ENCODE measurements at regions of chr1 and their contacts with region 1.

Region 1: DNA sequence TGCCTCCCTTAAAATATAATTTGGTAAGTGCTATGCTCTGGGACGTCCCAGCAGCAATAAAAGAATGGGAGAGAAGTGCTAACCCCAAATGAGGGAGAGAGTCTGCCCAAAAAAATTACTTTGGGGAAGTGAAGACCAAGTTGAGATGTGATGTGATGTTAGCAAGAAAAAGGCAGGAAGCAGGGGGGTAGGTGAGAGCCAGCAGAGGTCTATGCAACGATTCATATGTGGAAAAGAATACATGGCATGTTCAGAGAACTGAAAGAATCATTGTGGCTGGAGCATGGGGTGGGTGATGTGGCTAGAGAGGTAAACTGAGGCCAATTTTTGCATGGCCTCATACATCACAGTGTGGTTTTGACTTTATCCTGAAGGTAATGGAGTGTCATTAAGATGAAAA is 5.6 kb upstream of the CTPS1 start:
- DNase-seq: no peak
- H3K4me3 ChIP-seq: no peak overlapping the region
- H3K27ac ChIP-seq: no peak overlapping the region
- H3K4me1 ChIP-seq: peaks cover 7% of the 10 kb centered on the region; the same call in 1 of the 2 replicates
- H3K27me3 ChIP-seq: no peaks in the 10 kb centered on the region
- CTCF ChIP-seq: no peak

Region 2: DNA sequence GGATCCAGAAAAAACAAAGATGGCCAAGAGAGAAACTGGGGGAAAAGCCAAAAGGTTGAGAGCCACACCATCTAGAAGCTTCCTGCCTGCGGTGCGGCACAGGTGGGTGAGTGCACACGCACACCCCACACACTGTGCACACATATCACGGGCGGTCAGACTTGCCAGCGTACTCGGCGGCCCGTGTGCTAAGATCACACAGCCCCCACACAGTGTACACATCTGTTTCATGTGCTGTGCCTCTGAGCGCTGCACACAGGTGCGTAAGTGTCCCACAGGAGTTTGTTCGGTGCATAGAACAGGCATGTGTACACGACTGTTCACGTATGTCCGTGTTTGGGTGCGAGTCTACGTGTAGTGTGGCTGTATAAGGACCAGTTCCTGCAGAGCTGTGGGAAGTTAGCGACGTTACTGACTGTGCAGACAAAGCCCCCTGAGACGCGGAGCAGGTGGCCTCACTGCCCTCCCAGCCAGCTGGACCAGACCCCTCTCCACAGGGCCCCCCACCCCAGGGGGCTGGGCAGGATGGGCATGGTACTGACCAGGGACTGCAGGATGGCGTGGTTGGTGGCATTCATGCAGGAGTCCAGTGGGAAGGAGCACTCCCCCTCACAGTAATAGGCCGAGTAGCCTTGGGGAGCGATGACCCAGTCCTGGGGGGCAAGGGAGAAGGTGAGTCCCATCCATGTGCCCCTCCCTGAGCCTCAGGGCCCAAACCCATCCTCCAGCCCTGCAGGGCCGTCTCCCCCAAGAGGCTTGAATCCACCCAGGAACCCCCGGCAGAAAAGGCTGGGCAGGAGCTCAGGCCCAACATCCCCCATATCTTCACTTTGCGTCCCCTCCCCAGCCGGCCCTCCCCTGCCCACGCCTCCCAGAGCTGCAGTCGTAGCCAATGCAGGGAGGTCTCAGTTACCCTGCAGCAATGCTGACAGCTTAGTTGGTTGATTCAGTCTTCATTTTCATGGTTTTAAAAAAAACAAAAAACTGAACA is 1211.1 kb before region 1 on chr1:
- CTCF ChIA-PET with region 1: no interaction called
- POLR2A ChIA-PET with region 1: interaction called, 15 read pairs
- intact Hi-C with region 1: no loop called
- DNase-seq: no peak
- H3K4me3 ChIP-seq: no peak overlapping the region
- H3K27ac ChIP-seq: no peak overlapping the region
- H3K4me1 ChIP-seq: no peaks in the 10 kb centered on the region
- H3K27me3 ChIP-seq: no peaks in the 10 kb centered on the region
- CTCF ChIP-seq: no peak

Region 3: GRCh38 chr1:40107290-40108262 is 866.3 kb before region 1 on chr1:
- CTCF ChIA-PET with region 1: no interaction called
- POLR2A ChIA-PET with region 1: interaction called, 10 read pairs
- intact Hi-C with region 1: no loop called
- DNase-seq: peak; percentile 79 to 99
- H3K4me3 ChIP-seq: peak overlapping the region; percentile 34; the same call in 1 of the 2 replicates
- H3K27ac ChIP-seq: peak overlapping the region; percentile 87
- H3K4me1 ChIP-seq: peaks cover 64% of the 10 kb centered on the region
- H3K27me3 ChIP-seq: no peaks in the 10 kb centered on the region
- CTCF ChIP-seq: no peak

Region 4: GRCh38 chr1:40575336-40575735 is 398.6 kb before region 1 on chr1:
- CTCF ChIA-PET with region 1: no interaction called
- POLR2A ChIA-PET with region 1: no interaction called
- intact Hi-C with region 1: no loop called
- DNase-seq: no peak
- H3K4me3 ChIP-seq: no peak overlapping the region
- H3K27ac ChIP-seq: no peak overlapping the region
- H3K4me1 ChIP-seq: no peaks in the 10 kb centered on the region
- H3K27me3 ChIP-seq: 0 out of 2 replicates have a peak, but pooled peaks cover 3% of the 10 kb centered on the region
- CTCF ChIP-seq: no peak

Region 5: DNA sequence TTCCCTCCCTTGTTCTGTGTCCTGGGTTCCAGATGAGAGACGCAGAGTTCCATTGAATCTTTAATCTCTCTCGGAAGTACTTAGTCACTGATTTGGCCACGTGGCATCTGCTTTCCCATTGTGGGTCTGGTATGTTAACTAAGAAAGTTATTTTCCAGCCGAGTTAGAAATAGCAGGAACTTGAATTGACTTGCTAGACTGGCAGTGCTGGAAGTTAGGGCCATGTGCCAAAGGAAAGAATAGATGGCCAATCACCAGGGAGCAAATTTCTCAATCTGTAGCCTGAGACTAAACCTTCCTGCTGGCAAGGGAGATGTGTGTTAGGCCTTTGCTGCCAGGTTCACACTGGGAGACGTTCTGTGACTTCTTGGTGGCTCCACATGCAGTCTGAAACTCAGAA is 71.8 kb after region 1 on chr1:
- CTCF ChIA-PET with region 1: no interaction called
- POLR2A ChIA-PET with region 1: no interaction called
- intact Hi-C with region 1: no loop called
- DNase-seq: peak; percentile 57 to 63
- H3K4me3 ChIP-seq: no peak overlapping the region
- H3K27ac ChIP-seq: no peak overlapping the region
- H3K4me1 ChIP-seq: 0 out of 2 replicates have a peak, but pooled peaks cover 6% of the 10 kb centered on the region
- H3K27me3 ChIP-seq: no peaks in the 10 kb centered on the region
- CTCF ChIP-seq: no peak